H1 (cell line): ENCODE measurements at regions of chr16 and their contacts with region 1.

Region 1: GRCh38 chr16:3264137-3265036 is 8.0 kb upstream of the MEFV start:
- DNase-seq: peak; percentile 91 to 95
- H3K4me3 ChIP-seq: peak overlapping the region; percentile 31 to 67 (median 32)
- H3K27ac ChIP-seq: no peak overlapping the region
- H3K4me1 ChIP-seq: no peaks in the 10 kb centered on the region
- H3K27me3 ChIP-seq: no peaks in the 10 kb centered on the region
- CTCF ChIP-seq: peak in 1 of 3 experiments; percentile 17; a peak in 1 of 4 replicates
- EP300 ChIP-seq: no peak
- POLR2A ChIP-seq: no peak
- RAD21 ChIP-seq: peak; percentile 22 to 23; a peak in 2 of 4 replicates

Region 2: DNA sequence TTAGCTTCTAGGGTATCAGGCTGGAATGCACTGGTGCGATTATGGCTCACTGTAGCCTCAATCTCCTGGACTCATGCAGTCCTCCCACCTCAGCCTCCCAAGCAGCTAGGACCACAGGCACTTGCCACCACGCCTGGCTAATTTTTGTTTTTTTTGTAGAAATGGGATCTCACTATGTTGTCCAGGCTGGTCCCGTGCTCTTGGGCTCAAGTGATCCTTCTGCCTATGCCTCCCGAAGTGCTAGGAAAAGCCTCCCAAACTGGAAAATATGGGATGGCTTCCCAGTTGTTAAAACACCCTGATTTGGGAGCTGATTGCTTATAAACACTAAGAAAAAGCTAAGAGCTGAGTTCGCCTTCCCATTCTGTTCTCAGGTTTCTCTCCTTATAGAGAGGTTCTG is 12.3 kb after region 1 on chr16:
- CTCF ChIA-PET with region 1: interaction called, 24 read pairs
- POLR2A ChIA-PET with region 1: interaction called, 6 read pairs
- DNase-seq: no peak
- H3K4me3 ChIP-seq: no peak overlapping the region
- H3K27ac ChIP-seq: no peak overlapping the region
- H3K4me1 ChIP-seq: no peaks in the 10 kb centered on the region
- H3K27me3 ChIP-seq: no peaks in the 10 kb centered on the region; a peak in 1 of 7 replicates
- CTCF ChIP-seq: no peak
- EP300 ChIP-seq: no peak
- POLR2A ChIP-seq: no peak
- RAD21 ChIP-seq: no peak

Region 3: GRCh38 chr16:3282730-3283524 is 18.5 kb after region 1 on chr16 and contains the start of gene ZNF263:
- CTCF ChIA-PET with region 1: interaction called, 12 read pairs
- POLR2A ChIA-PET with region 1: interaction called, 53 read pairs
- DNase-seq: peak; percentile 80 to 90
- H3K4me3 ChIP-seq: peak within 1 kb of the TSS; percentile 81 to 99 (median 97)
- H3K27ac ChIP-seq: peak within 1 kb of the TSS; percentile 97
- H3K4me1 ChIP-seq: peaks cover 0 to 8% (median 1%) of the 10 kb centered on the region in 4 experiments; a peak in 4 of 7 replicates
- H3K27me3 ChIP-seq: no peaks in the 10 kb centered on the region
- CTCF ChIP-seq: no peak
- EP300 ChIP-seq: no peak
- POLR2A ChIP-seq: peak; percentile 26 to 97
- RAD21 ChIP-seq: no peak
- total RNA-seq, gene ZNF263: 26.7 and 27.8 TPM in 2 replicates

Region 4: GRCh38 chr16:3311496-3311895 is 47.1 kb after region 1 on chr16:
- CTCF ChIA-PET with region 1: interaction called, 11 read pairs
- POLR2A ChIA-PET with region 1: interaction called, 3 read pairs
- DNase-seq: no peak
- H3K4me3 ChIP-seq: no peak overlapping the region
- H3K27ac ChIP-seq: no peak overlapping the region
- H3K4me1 ChIP-seq: no peaks in the 10 kb centered on the region
- H3K27me3 ChIP-seq: no peaks in the 10 kb centered on the region; a peak in 1 of 7 replicates
- CTCF ChIP-seq: no peak
- EP300 ChIP-seq: no peak
- POLR2A ChIP-seq: no peak
- RAD21 ChIP-seq: no peak